Right ventricle myocardium inferior (tissue), 1 donor: ENCODE measurements at regions of chr18 and their contacts with region 1.

Region 1: DNA sequence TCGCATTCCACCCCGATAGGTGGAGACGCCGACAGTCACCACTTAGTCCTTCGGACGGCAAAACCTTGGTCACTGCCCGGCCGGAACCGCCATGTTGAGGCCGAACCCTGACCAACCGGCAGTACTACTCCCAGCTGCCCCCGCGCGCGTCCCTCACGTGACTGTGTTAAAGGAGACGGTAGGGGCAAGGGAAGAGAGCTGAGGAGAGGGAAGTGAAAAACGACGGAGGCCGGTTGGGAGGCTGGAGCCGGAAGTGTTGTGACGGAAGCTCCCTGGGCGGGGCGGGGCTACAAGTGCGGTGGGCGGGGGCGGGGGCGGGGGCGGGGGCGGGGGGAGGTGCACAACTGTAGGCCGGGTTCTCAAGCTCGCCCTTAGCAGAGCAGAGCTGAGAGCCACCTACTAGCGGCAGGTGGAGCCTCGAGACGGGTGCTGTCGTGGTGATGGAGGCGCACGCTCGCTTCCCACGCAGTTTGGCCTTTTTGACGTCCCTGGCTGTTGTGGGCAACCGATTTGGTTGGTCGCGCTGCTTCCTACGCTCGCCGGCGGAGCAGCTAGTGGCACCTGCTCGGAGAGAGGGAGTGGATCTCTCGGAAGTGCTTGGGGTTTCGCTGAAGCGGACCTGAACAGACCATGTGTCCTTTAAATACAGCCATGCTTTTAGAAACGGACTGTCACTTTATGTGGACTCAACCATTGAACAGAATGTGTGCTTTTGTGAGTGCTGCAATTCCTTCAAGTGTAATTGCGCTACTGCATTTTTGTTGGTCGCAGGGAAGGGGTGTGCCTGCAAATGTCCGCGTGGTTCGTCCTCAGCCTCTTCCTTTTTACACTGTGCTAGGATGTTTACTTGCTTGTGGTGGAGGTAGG is at the start of gene TRAPPC8:
- DNase-seq: peak; percentile 100
- ATAC-seq: peak; percentile 99
- total RNA-seq, gene TRAPPC8: 30.9 TPM

Region 2: DNA sequence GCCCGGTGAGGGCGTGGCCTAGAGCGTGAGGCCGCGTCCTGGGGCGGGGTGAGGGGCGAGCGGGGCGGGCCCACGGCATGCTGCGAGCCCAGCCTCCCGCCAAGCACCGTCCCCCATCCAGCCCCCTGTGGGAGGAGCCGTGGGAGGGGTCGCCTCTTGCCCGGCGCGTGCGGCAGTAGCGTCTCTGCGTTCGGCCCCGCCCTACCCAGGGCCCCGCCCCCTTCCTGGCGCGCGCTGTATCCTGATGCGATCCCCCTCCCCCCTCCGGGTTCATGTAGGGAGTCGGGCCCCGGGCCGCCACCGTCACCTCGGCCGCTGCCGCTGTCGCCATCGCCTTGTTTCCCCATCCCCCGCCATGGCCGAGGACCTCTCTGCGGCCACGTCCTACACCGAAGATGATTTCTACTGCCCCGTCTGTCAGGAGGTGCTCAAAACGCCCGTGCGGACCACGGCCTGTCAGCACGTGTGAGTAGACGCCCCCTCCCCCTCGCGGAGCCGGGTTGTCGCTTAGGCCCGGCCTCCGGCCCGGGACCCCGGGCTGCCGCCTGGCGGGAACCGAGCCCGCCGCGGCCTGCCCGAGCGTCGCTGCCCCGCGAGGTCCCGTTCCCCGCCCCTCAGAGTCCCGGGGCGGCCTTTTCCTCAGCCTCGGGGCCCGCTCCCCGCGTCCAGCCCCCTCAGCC is 149.3 kb after region 1 on chr18:
- intact Hi-C with region 1: loop called (anchors 2 kb)
- DNase-seq: peak; percentile 99
- ATAC-seq: peak; percentile 99

Region 3: DNA sequence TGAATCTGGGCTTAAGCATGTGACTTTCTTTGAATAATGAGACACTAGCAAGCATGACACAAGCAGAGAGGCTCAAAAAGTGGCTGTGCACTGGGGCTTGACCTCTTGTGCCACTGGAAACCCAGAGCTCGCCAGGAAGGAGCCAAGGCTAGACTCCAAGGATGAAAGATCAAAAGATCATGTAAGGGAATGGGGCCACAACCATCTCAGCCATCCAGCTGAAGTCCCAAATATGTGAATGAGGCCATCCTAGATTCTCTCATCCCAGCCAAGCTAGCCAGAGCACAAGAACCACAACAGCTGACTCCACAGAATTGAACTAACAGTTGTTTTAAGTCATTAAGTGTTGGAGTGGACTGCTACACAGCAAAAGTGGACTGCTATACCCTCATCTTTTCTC is 1209.1 kb after region 1 on chr18:
- intact Hi-C with region 1: no loop called
- DNase-seq: no peak
- ATAC-seq: no peak